Activated CD8-positive, alpha-beta T cell treated with anti-CD3 and anti-CD28 coated beads, Interleukin-2, amount 10 ng/mL, durations not matched to agents 7 days and 5 days (primary cell): ENCODE measurements at regions of chr12 and their contacts with region 1.

Region 1: DNA sequence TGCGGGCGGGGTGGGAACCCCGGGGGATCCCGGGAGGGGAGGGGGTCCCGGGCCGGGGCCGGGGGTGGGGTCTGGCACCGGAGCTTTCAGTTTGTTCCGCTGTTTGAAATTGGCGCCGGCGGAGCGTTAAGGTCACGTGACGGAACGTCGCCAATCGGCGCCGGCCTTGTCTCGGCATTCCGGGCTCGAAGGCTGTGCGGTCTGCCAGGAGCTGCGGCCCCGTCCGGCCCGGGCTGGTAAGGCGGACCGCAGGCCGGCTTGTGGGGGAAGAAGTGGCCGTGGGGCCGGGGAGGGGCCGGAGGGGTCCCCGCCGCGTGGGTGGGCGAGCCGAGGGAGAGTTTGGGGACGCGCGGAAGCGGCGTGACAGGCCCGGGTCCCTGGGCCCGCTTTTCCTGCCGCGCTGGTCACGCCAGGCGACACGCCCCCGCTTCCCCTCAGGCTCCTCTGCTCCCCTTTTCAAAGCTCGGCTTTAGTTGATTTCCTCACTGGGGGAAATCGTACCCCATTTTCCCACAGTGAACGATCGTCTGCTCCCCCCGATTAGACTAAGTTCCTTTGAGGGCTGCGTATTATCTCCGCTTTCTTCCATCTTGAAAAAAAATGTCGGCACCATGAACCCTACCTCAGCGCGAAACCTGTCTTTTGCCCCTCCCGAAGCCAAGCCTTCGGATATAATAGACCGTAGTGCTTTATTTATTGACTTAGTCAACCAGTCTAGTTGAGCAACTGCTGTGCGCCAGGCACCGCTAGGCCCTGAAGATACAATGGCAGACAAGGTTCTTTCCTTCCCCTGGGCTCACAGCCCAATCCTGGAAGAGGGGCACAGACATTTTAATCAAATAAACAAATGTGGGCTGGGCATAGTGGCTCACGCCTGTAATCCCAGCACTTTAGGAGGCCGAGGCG is at the starts of genes FOXM1 and RHNO1:
- DNase-seq: peak; percentile 92
- ATAC-seq: peak; percentile 83
- H3K4me3 Mint-ChIP-seq: peak within 1 kb of the TSS; percentile 86
- H3K27ac Mint-ChIP-seq: peak within 1 kb of the TSS; percentile 97
- H3K4me1 Mint-ChIP-seq: peaks cover 44% of the 10 kb centered on the region
- H3K27me3 Mint-ChIP-seq: no peaks in the 10 kb centered on the region
- total RNA-seq, gene FOXM1: 138 to 142 TPM
- total RNA-seq, gene RHNO1: 56.9 to 65.9 TPM

Region 2: GRCh38 chr12:2759733-2760132 is 117.6 kb before region 1 on chr12:
- CTCF ChIA-PET with region 1: no interaction called
- POLR2A ChIA-PET with region 1: no interaction called
- DNase-seq: no peak
- ATAC-seq: no peak
- H3K4me3 Mint-ChIP-seq: no peak overlapping the region
- H3K27ac Mint-ChIP-seq: no peak overlapping the region
- H3K4me1 Mint-ChIP-seq: no peaks in the 10 kb centered on the region
- H3K27me3 Mint-ChIP-seq: peaks cover 13% of the 10 kb centered on the region

Region 3: DNA sequence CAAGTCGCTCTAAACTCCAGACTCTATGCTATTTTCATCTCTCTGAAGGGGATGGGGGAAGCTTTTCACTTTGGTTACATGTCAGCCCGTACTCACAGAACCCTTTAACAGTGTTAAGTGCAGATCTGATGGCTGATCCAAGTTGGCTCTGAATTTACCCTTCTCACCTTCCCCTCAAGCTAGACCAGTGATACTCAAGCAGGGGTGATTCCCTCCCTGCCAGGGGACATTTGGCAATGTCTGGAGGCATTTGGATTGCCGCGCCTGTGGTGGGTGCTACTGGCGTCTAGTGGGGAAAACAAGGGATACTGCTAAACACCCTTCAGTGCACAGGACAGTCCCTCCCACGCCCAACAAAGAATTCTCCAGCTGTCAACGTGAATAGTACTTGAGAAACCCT is 14.4 kb before region 1 on chr12:
- CTCF ChIA-PET with region 1: interaction called, 5 read pairs
- POLR2A ChIA-PET with region 1: interaction called, 11 read pairs
- DNase-seq: no peak
- ATAC-seq: no peak
- H3K4me3 Mint-ChIP-seq: no peak overlapping the region
- H3K27ac Mint-ChIP-seq: no peak overlapping the region
- H3K4me1 Mint-ChIP-seq: peaks cover 2% of the 10 kb centered on the region
- H3K27me3 Mint-ChIP-seq: no peaks in the 10 kb centered on the region

Region 4: DNA sequence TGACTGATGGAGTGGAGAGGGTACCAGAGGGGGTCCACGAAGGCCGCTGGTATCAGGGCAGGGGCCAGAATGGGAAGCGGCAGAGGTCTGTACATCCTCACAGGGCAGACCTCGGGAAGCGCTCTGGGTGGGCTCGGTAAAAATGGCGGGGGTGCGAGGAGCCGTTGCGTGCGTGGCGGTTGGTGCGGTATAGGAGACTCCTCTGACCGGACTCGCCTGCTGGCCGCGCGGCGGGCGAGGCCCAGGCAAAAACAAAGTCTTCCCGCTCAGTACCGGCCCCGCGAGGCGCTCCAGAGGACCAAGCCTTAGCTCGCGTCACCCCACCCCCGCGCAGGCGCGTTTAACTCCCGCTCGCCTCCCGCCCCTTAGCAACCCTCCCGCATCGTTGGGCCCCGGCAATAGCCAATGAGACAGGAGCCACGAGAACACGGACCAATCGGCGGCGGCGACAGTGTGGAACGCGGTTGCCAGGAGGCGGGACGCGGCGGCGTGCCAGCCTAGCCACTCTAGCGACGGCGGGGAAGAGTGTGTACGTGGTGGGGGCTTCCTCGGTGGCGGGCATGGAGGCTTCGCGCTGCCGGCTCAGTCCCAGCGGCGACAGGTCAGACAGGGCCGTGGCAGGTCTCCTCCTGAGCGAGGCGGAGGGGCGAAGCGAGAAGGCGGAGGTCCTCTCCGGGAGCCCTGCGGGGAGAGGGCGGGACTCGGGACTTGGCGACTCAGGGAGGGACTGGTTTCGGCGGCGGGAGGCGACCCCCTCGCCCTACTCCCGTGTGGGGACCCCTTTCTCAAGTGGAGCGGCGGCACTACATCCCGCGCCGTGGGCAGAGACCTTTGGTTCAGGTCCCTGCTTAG is 13.3 kb after region 1 on chr12 and contains the start of gene TULP3:
- CTCF ChIA-PET with region 1: interaction called, 5 read pairs
- POLR2A ChIA-PET with region 1: interaction called, 21 read pairs
- DNase-seq: peak; percentile 98
- ATAC-seq: peak; percentile 99
- H3K4me3 Mint-ChIP-seq: peak within 1 kb of the TSS; percentile 93
- H3K27ac Mint-ChIP-seq: peak within 1 kb of the TSS; percentile 92
- H3K4me1 Mint-ChIP-seq: peaks cover 48% of the 10 kb centered on the region
- H3K27me3 Mint-ChIP-seq: no peaks in the 10 kb centered on the region
- total RNA-seq, gene TULP3: 9.2 to 10.5 TPM